Naive thymus-derived CD4-positive, alpha-beta T cell (primary cell): ENCODE measurements at regions of chr12 and their contacts with region 1.

Region 1: GRCh38 chr12:949453-950191 is at the start of gene RAD52:
- DNase-seq: peak; percentile 94 to 99 (median 97)
- ATAC-seq: peak; percentile 96
- H3K4me3 ChIP-seq: peak within 1 kb of the TSS; percentile 83
- H3K4me3 Mint-ChIP-seq: peak within 1 kb of the TSS; percentile 90 to 98 (median 94)
- H3K27ac ChIP-seq: peak within 1 kb of the TSS; percentile 78
- H3K27ac Mint-ChIP-seq: peak within 1 kb of the TSS; percentile 88 to 98 (median 93)
- H3K4me1 ChIP-seq: peaks cover 0 to 3% of the 10 kb centered on the region in 2 donors
- H3K4me1 Mint-ChIP-seq: peaks cover 20 to 34% (median 30%) of the 10 kb centered on the region in 7 donors
- H3K27me3 ChIP-seq: no peaks in the 10 kb centered on the region
- H3K27me3 Mint-ChIP-seq: peaks cover 0 to 4% (median 0%) of the 10 kb centered on the region in 5 donors
- total RNA-seq, gene RAD52: 11.0 to 34.9 (median 18.3) TPM

Region 2: GRCh38 chr12:401235-402028 is 548.2 kb before region 1 on chr12 and contains the start of gene CCDC77:
- CTCF ChIA-PET with region 1: no interaction called
- POLR2A ChIA-PET with region 1: no interaction called
- intact Hi-C with region 1: loop called (anchors 1 to 2 kb)
- DNase-seq: peak; percentile 91 to 97 (median 95)
- ATAC-seq: peak; percentile 100
- H3K4me3 ChIP-seq: peak within 1 kb of the TSS; percentile 94
- H3K4me3 Mint-ChIP-seq: no peak within 1 kb of the TSS
- H3K27ac ChIP-seq: peak within 1 kb of the TSS; percentile 71
- H3K27ac Mint-ChIP-seq: peak within 1 kb of the TSS in 1 of 9 donors; percentile 62
- H3K4me1 ChIP-seq: peaks cover 4 to 13% of the 10 kb centered on the region in 2 donors
- H3K4me1 Mint-ChIP-seq: peaks cover 0 to 9% (median 5%) of the 10 kb centered on the region in 7 donors
- H3K27me3 ChIP-seq: no peaks in the 10 kb centered on the region
- H3K27me3 Mint-ChIP-seq: no peaks in the 10 kb centered on the region
- total RNA-seq, gene CCDC77: 9.7 to 15.6 (median 12.7) TPM

Region 3: GRCh38 chr12:642633-643474 is 306.8 kb before region 1 on chr12:
- CTCF ChIA-PET with region 1: no interaction called
- POLR2A ChIA-PET with region 1: no interaction called
- intact Hi-C with region 1: loop called in 1 of 2 experiments (anchors 2 kb)
- DNase-seq: peak; percentile 64 to 86 (median 80)
- ATAC-seq: peak; percentile 88
- H3K4me3 ChIP-seq: peak overlapping the region; percentile 54
- H3K4me3 Mint-ChIP-seq: peak overlapping the region; percentile 78 to 92 (median 82)
- H3K27ac ChIP-seq: peak overlapping the region; percentile 91
- H3K27ac Mint-ChIP-seq: peak overlapping the region; percentile 85 to 98 (median 95)
- H3K4me1 ChIP-seq: peaks cover 20 to 30% of the 10 kb centered on the region in 2 donors
- H3K4me1 Mint-ChIP-seq: peaks cover 26 to 72% (median 60%) of the 10 kb centered on the region in 7 donors
- H3K27me3 ChIP-seq: no peaks in the 10 kb centered on the region
- H3K27me3 Mint-ChIP-seq: no peaks in the 10 kb centered on the region

Region 4: DNA sequence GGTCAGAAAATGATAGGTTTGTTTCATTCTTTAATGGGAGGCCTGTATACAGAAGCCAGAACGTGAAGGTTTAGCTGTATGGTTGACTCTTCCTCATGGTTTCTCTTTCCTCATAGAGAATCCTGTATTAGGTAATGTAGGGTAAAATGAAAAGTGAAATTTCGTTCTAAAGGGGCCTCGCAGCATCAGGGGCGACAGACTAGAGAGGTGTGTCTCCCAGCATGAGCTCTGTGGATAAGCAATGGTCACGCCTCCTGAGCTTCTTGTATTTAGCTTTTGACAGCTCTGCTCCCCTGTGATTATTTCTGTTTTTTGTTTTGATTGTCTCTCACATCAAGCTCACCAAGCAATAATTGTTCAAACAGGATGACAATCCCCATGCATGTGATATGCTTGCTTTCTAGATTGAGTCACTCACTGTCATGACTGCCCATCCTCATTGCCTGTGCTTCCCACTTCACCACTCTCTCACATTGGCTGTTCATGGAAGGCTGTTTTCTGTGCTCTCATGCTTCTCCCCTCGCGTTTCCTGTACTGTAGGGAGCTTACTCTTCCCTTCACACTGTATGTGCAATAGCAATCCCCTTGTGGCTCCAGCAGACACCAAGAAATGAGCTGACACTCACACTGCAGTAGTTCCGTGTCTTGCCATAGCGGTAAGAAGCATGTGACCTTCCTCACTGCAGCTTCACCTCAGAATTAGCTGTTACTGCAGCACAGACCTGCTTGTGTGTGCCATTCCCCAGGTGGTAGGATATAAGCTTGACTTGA is 44.2 kb before region 1 on chr12:
- CTCF ChIA-PET with region 1: interaction called, 4 read pairs
- POLR2A ChIA-PET with region 1: no interaction called
- intact Hi-C with region 1: loop called (anchors 5 kb)
- DNase-seq: peak in 4 of 9 donors; percentile 8 to 33 (median 22)
- ATAC-seq: peak; percentile 73
- H3K4me3 ChIP-seq: no peak overlapping the region
- H3K4me3 Mint-ChIP-seq: peak overlapping the region; percentile 2 to 70 (median 53)
- H3K27ac ChIP-seq: peak overlapping the region; percentile 19
- H3K27ac Mint-ChIP-seq: peak overlapping the region; percentile 41 to 83 (median 74)
- H3K4me1 ChIP-seq: peaks cover 0 to 7% of the 10 kb centered on the region in 2 donors
- H3K4me1 Mint-ChIP-seq: peaks cover 10 to 48% (median 36%) of the 10 kb centered on the region in 7 donors
- H3K27me3 ChIP-seq: no peaks in the 10 kb centered on the region
- H3K27me3 Mint-ChIP-seq: no peaks in the 10 kb centered on the region

Region 5: GRCh38 chr12:990661-991349 is 41.2 kb after region 1 on chr12 and contains the start of gene ERC1:
- CTCF ChIA-PET with region 1: interaction called, 8 read pairs
- POLR2A ChIA-PET with region 1: interaction called, 6 read pairs
- intact Hi-C with region 1: loop called (anchors 1 kb)
- DNase-seq: peak; percentile 77 to 93 (median 87)
- ATAC-seq: peak; percentile 94
- H3K4me3 ChIP-seq: peak within 1 kb of the TSS; percentile 89
- H3K4me3 Mint-ChIP-seq: peak within 1 kb of the TSS; percentile 86 to 100 (median 97)
- H3K27ac ChIP-seq: peak within 1 kb of the TSS; percentile 87
- H3K27ac Mint-ChIP-seq: peak within 1 kb of the TSS; percentile 89 to 98 (median 96)
- H3K4me1 ChIP-seq: peaks cover 0 to 17% of the 10 kb centered on the region in 2 donors
- H3K4me1 Mint-ChIP-seq: peaks cover 34 to 55% (median 46%) of the 10 kb centered on the region in 7 donors
- H3K27me3 ChIP-seq: no peaks in the 10 kb centered on the region
- H3K27me3 Mint-ChIP-seq: no peaks in the 10 kb centered on the region
- total RNA-seq, gene ERC1: 48.6 to 62.0 (median 52.4) TPM